ENCODE measurements at regions of chr11 and their contacts with region 1.

Region 1: DNA sequence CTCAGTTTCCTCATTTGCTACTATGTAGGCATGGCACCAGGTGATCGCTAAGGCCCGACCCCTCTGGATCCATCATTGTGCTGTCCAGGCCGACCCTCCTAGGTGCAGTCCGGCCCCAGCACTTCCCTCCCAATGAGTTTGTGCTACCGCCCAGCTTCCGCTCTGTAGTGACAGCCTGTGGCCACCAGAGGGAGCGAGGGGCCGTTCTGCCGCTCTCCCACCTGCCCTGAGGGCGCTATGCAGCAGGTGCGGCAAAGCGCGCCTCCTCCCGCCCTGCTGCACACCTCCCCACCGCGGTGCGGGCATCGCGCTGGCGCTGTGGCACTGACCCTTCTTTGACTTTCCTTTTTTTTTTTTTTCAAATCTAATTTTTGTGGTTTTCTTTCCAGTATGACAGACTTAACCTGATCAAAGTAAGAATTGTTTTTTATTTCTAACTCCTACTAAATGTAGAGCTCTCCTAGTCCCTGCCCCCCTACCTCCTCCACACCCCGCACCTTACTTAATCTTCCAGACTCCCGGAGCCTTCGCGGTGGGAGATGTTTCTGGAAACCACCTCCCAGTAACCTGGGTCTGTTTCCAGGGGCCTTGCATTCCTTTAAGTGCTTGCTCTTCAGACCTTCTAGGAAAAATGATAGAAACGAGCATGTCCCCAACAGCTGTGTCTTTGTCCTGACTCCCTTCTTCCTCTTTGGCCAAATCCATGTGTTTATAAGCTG is 73.7 kb downstream of the SCN3B start:
- DNase-seq: peak; percentile 58 to 84
- ATAC-seq: peak; percentile 64
- H3K4me3 ChIP-seq: no peak overlapping the region
- H3K27ac ChIP-seq: no peak overlapping the region
- H3K4me1 ChIP-seq: no peaks in the 10 kb centered on the region
- H3K27me3 ChIP-seq: no peaks in the 10 kb centered on the region

Region 2: DNA sequence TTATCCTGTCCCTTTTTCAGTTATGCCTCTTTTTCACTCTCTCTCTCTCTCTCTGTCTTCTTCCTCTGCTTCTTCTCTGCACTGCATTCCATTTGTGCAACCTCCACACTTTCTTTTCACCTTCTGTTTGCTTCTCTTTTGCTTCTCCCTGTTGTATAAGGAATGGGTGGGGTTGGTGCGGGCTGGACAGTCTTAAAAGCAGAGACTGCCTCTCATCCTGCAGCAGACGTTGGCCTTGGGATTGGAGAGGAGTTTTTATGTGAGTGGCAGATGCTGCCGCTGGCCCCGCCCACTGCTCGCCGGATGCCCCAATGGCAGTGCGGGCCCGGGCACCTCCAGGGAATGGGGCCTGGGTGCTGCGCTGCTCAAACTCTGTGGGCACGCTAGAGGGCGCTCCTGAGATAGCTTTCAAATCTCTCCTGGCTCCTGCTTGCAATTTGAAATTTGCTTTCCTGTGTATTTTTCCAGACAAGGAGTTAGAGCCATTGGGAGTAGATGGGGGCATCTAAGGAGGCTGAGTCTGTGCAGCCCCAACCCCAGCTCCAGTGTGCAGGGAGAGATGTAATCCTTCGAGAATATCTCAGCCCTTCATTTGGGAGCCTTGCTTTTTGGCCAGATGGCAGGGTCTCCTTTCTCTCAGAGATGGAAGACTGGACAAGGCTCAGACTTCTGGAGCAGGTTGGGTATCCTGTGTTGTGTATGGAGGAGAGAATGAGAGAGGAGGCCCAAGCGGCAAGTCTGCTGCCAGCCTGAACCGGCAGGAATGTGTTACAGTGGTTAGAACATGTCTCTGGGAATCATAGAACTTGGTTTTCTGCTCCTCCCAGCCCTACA is 69.5 kb before region 1 on chr11:
- intact Hi-C with region 1: loop called in 1 of 2 experiments (anchors 2 kb)
- DNase-seq: peak; percentile 87 to 89
- ATAC-seq: peak; percentile 89
- H3K4me3 ChIP-seq: no peak overlapping the region
- H3K27ac ChIP-seq: no peak overlapping the region
- H3K4me1 ChIP-seq: no peaks in the 10 kb centered on the region
- H3K27me3 ChIP-seq: no peaks in the 10 kb centered on the region

Region 3: GRCh38 chr11:123707606-123708205 is 127.0 kb after region 1 on chr11:
- intact Hi-C with region 1: loop called in 1 of 2 experiments (anchors 5 kb)
- DNase-seq: no peak
- ATAC-seq: no peak
- H3K4me3 ChIP-seq: no peak overlapping the region
- H3K27ac ChIP-seq: no peak overlapping the region
- H3K4me1 ChIP-seq: no peaks in the 10 kb centered on the region
- H3K27me3 ChIP-seq: no peaks in the 10 kb centered on the region

Region 4: DNA sequence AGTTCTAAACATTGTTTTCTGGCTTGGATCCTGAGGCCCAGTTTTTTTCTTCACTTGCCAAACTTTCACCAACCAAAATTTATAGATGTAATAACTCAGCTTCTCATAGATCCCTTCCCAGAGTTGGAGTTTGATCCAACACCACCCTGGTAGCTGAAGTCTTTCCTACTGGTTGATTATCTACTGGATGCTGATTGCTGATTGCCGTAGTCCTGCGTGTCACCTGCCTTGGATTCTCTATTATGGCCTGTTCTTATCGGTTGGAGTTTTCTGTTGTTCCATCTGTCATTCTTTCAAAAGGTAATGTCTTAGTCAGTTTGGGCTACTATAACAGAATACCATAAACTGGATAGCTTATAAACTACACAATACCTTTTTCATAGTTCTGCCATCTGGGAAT is 190.9 kb after region 1 on chr11:
- intact Hi-C with region 1: no loop called
- DNase-seq: no peak
- ATAC-seq: no peak
- H3K4me3 ChIP-seq: no peak overlapping the region
- H3K27ac ChIP-seq: no peak overlapping the region
- H3K4me1 ChIP-seq: no peaks in the 10 kb centered on the region
- H3K27me3 ChIP-seq: no peaks in the 10 kb centered on the region

Region 5: GRCh38 chr11:124041254-124041653 is 460.5 kb after region 1 on chr11 and contains the start of gene OR10G7:
- intact Hi-C with region 1: no loop called
- DNase-seq: no peak
- ATAC-seq: no peak
- H3K4me3 ChIP-seq: no peak within 1 kb of the TSS
- H3K27ac ChIP-seq: no peak within 1 kb of the TSS
- H3K4me1 ChIP-seq: no peaks in the 10 kb centered on the region
- H3K27me3 ChIP-seq: no peaks in the 10 kb centered on the region
- total RNA-seq, gene OR10G7: not detected